ENCODE measurements at regions of chr1 and their contacts with region 1.

Region 1: GRCh38 chr1:87757676-87758075 is 429.0 kb downstream of the LMO4 start:
- DNase-seq: peak; percentile 57
- ATAC-seq: no peak
- H3K4me3 ChIP-seq: no peak overlapping the region
- H3K27ac ChIP-seq: no peak overlapping the region
- H3K4me1 ChIP-seq: peaks cover 12% of the 10 kb centered on the region
- H3K27me3 ChIP-seq: no peaks in the 10 kb centered on the region
- CTCF ChIP-seq: no peak
- POLR2A ChIP-seq: no peak
- RAD21 ChIP-seq: no peak

Region 2: DNA sequence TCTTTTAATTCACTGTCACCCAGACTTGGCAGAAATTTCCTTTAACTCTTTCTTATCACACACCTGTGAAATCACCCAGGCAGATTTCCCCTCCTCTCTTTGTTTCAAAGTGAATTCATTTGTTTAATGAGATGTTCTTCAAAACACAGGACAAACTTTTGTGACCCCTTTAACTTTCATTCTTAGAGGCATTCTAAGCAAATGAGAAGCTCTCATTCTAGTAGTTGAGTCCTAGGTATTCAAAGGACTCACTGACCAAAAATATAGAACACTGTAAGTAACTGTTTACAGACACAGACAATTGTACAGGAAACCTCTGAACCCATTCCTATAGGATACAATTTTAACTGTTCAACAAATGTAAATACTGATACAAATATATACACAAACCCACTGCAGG is 1892.1 kb after region 1 on chr1:
- CTCF ChIA-PET with region 1: no interaction called
- POLR2A ChIA-PET with region 1: no interaction called
- dilution Hi-C with region 1: no loop called
- in situ Hi-C with region 1: no loop called
- intact Hi-C with region 1: loop called (anchors 10 kb)
- DNase-seq: no peak
- ATAC-seq: no peak; the same call in 1 of the 2 replicates
- H3K4me3 ChIP-seq: no peak overlapping the region
- H3K27ac ChIP-seq: no peak overlapping the region
- H3K4me1 ChIP-seq: no peaks in the 10 kb centered on the region; the same call in 1 of the 2 replicates
- H3K27me3 ChIP-seq: no peaks in the 10 kb centered on the region
- CTCF ChIP-seq: no peak
- POLR2A ChIP-seq: no peak
- RAD21 ChIP-seq: no peak

Measured in IMR-90 (cell line).